ENCODE measurements at regions of chr14 and their contacts with region 1.

Region 1: GRCh38 chr14:77111043-77111442 is 13.0 kb downstream of the CIPC start:
- DNase-seq: no peak
- H3K4me3 ChIP-seq: no peak overlapping the region
- H3K27me3 ChIP-seq: no peaks in the 10 kb centered on the region
- CTCF ChIP-seq: no peak

Region 2: GRCh38 chr14:77124345-77125280 is 13.6 kb after region 1 on chr14:
- CTCF ChIA-PET with region 1: interaction called, 62 read pairs
- POLR2A ChIA-PET with region 1: no interaction called
- DNase-seq: no peak
- H3K4me3 ChIP-seq: peak overlapping the region; percentile 45
- H3K27me3 ChIP-seq: peaks cover 19% of the 10 kb centered on the region
- CTCF ChIP-seq: no peak